Activated naive CD4-positive, alpha-beta T cell treated with anti-CD3 and anti-CD28 coated beads for 36 hours (primary cell): ENCODE measurements at regions of chr12 and their contacts with region 1.

Region 1: GRCh38 chr12:94372461-94372860 is 87.2 kb downstream of the CEP83 start:
- DNase-seq: peak; percentile 7
- H3K4me3 Mint-ChIP-seq: no peak overlapping the region
- H3K27ac Mint-ChIP-seq: peak overlapping the region; percentile 66
- H3K4me1 Mint-ChIP-seq: peaks cover 23% of the 10 kb centered on the region
- H3K27me3 Mint-ChIP-seq: no peaks in the 10 kb centered on the region

Region 2: GRCh38 chr12:94353130-94353529 is 19.3 kb before region 1 on chr12:
- CTCF ChIA-PET with region 1: no interaction called
- intact Hi-C with region 1: loop called (anchors 2 kb)
- DNase-seq: no peak
- H3K4me3 Mint-ChIP-seq: no peak overlapping the region
- H3K27ac Mint-ChIP-seq: no peak overlapping the region
- H3K4me1 Mint-ChIP-seq: peaks cover 6% of the 10 kb centered on the region
- H3K27me3 Mint-ChIP-seq: no peaks in the 10 kb centered on the region

Region 3: GRCh38 chr12:94427501-94428381 is 55.3 kb after region 1 on chr12:
- CTCF ChIA-PET with region 1: no interaction called
- intact Hi-C with region 1: loop called (anchors 1 kb)
- DNase-seq: peak; percentile 45
- H3K4me3 Mint-ChIP-seq: peak overlapping the region; percentile 28
- H3K27ac Mint-ChIP-seq: peak overlapping the region; percentile 63
- H3K4me1 Mint-ChIP-seq: peaks cover 34% of the 10 kb centered on the region
- H3K27me3 Mint-ChIP-seq: no peaks in the 10 kb centered on the region